Activated naive CD4-positive, alpha-beta T cell treated with anti-CD3 and anti-CD28 coated beads for 36 hours (primary cell): ENCODE measurements at regions of chr1 and their contacts with region 1.

Region 1: GRCh38 chr1:173420330-173420806 is 56.8 kb upstream of the PRDX6 start:
- DNase-seq: peak; percentile 75
- H3K4me3 Mint-ChIP-seq: no peak overlapping the region
- H3K27ac Mint-ChIP-seq: no peak overlapping the region
- H3K4me1 Mint-ChIP-seq: peaks cover 2% of the 10 kb centered on the region
- H3K27me3 Mint-ChIP-seq: no peaks in the 10 kb centered on the region

Region 2: DNA sequence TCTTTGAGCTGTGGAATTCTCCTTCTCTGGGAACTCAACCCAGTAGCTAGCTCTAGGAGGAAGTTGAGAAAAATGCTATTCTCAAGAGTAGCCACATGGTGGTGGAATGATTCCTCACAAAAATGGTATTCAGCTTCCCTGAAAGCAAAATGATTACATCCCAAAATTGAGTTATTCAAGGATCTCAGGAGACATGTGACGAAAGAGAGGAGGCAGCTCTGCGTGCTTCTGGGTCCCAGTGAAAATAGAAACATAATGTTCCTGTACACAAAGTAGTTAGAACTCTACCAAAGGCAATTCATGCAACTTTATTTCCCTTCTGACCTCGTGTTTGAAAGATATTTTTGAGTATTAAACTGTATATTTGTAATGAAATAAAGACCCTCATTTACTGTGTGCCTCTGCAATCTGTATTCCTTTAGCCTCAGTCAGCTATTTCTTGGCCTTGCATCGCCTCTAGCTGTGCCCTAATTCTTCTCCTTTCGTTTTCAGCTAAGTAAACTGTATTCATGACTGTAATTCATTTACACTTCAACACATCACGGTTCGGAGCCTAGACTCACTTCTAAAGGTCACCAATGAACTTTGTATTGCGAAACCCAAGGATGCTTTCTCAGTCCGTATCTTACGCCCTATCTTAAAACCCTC is 594.1 kb before region 1 on chr1:
- CTCF ChIA-PET with region 1: interaction called, 6 read pairs
- intact Hi-C with region 1: loop called (anchors 5 kb)
- DNase-seq: no peak
- H3K4me3 Mint-ChIP-seq: no peak overlapping the region
- H3K27ac Mint-ChIP-seq: no peak overlapping the region
- H3K4me1 Mint-ChIP-seq: no peaks in the 10 kb centered on the region
- H3K27me3 Mint-ChIP-seq: peaks cover 6% of the 10 kb centered on the region

Region 3: GRCh38 chr1:173314656-173315055 is 105.7 kb before region 1 on chr1:
- CTCF ChIA-PET with region 1: no interaction called
- intact Hi-C with region 1: no loop called
- DNase-seq: no peak
- H3K4me3 Mint-ChIP-seq: no peak overlapping the region
- H3K27ac Mint-ChIP-seq: no peak overlapping the region
- H3K4me1 Mint-ChIP-seq: peaks cover 7% of the 10 kb centered on the region
- H3K27me3 Mint-ChIP-seq: no peaks in the 10 kb centered on the region

Region 4: GRCh38 chr1:174743654-174744561 is 1323.5 kb after region 1 on chr1:
- CTCF ChIA-PET with region 1: no interaction called
- intact Hi-C with region 1: loop called (anchors 2 kb)
- DNase-seq: no peak
- H3K4me3 Mint-ChIP-seq: no peak overlapping the region
- H3K27ac Mint-ChIP-seq: no peak overlapping the region
- H3K4me1 Mint-ChIP-seq: peaks cover 10% of the 10 kb centered on the region
- H3K27me3 Mint-ChIP-seq: no peaks in the 10 kb centered on the region